ENCODE measurements at regions of chr2 and their contacts with region 1.

Region 1: GRCh38 chr2:172427256-172427989 is at the start of gene ITGA6:
- DNase-seq: peak; percentile 38
- ATAC-seq: peak; percentile 72
- H3K4me3 Mint-ChIP-seq: peak within 1 kb of the TSS; percentile 79
- H3K27ac Mint-ChIP-seq: no peak within 1 kb of the TSS
- H3K4me1 Mint-ChIP-seq: peaks cover 14% of the 10 kb centered on the region
- H3K27me3 Mint-ChIP-seq: peaks cover 57% of the 10 kb centered on the region
- CTCF ChIP-seq: no peak
- total RNA-seq, gene ITGA6: 0.31 and 0.42 TPM in 2 replicates

Region 2: DNA sequence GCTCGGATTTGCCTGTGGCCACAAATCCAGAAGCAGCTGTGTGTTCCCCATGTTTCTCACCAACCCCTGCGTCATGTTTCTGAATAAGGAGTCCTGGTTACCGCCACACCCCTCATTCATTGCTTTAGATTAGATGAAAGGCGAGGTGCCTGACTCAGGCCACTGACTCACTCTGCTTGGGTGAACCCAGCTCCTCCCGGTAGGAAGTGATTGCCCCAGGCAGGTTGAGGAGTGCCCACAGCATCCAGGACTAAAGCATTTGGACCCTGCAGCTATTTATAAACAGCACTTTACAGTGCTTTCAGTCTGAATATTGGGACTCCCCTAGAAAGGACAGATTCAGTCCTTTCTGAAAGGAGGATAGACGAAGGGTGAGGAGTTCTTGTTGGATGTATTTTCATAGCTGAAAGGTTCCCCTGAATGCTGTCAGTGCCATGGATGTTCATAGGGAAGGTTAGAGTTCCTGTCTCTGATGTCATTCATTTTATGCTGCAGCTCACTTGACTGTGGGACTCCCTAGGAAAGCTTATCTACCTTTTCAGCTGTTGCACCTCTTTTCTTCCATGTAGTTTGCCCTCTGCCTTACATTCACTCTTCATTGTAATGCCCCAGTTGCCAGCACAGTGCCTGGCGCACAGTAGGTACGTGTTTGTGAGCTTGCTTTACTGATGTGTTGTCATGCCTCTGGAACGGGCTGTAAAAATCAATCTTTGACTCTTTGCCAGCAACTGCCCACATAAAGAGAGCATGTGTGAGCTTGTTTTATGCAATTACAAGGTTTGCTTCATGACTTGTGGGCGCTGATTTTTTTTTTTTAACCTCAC is 14.9 kb after region 1 on chr2:
- CTCF ChIA-PET with region 1: no interaction called
- POLR2A ChIA-PET with region 1: no interaction called
- intact Hi-C with region 1: loop called (anchors 1 kb)
- DNase-seq: no peak
- ATAC-seq: no peak
- H3K4me3 Mint-ChIP-seq: no peak overlapping the region
- H3K27ac Mint-ChIP-seq: no peak overlapping the region
- H3K4me1 Mint-ChIP-seq: peaks cover 2% of the 10 kb centered on the region
- H3K27me3 Mint-ChIP-seq: peaks cover 23% of the 10 kb centered on the region
- CTCF ChIP-seq: no peak